Heart left ventricle (tissue), 16 donors: ENCODE measurements at regions of chr7 and their contacts with region 1.

Region 1: GRCh38 chr7:54201501-54201900 is 340.7 kb upstream of the VSTM2A start:
- DNase-seq: no peak
- ATAC-seq: no peak
- H3K4me3 ChIP-seq: no peak overlapping the region
- H3K27ac ChIP-seq: no peak overlapping the region
- H3K4me1 ChIP-seq: no peaks in the 10 kb centered on the region
- H3K27me3 ChIP-seq: no peaks in the 10 kb centered on the region
- CTCF ChIP-seq: no peak
- POLR2A ChIP-seq: no peak

Region 2: GRCh38 chr7:54141576-54141975 is 59.9 kb before region 1 on chr7:
- intact Hi-C with region 1: loop called in 1 of 10 experiments (anchors 10 kb)
- DNase-seq: peak in 1 of 5 donors; percentile 9
- ATAC-seq: peak in 2 of 4 donors; percentile 50 to 57
- H3K4me3 ChIP-seq: no peak overlapping the region
- H3K27ac ChIP-seq: no peak overlapping the region
- H3K4me1 ChIP-seq: no peaks in the 10 kb centered on the region
- H3K27me3 ChIP-seq: no peaks in the 10 kb centered on the region
- CTCF ChIP-seq: no peak
- POLR2A ChIP-seq: no peak

Region 3: GRCh38 chr7:54409917-54410316 is 208.4 kb after region 1 on chr7:
- intact Hi-C with region 1: no loop called
- DNase-seq: no peak
- ATAC-seq: no peak
- H3K4me3 ChIP-seq: no peak overlapping the region
- H3K27ac ChIP-seq: no peak overlapping the region
- H3K4me1 ChIP-seq: no peaks in the 10 kb centered on the region
- H3K27me3 ChIP-seq: no peaks in the 10 kb centered on the region
- CTCF ChIP-seq: no peak
- POLR2A ChIP-seq: no peak

Region 4: DNA sequence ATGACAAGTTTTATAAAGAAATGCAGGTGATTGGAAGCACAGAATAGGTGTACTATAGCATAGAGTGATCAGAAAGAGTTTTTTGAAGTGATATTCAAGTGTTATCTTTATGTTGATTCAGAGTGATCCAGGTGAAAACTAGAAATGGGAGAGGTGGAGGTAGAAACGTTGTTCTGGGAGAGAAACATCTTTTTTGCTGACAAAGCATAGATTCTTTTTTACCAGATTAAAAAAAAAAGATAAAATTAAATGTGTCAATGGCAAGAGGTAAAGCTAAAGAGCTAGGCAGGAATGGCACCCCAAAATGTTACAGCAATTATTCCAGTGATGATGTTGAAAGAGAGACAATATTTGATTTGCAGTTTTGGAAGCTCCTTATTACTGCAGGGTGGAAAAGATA is 328.1 kb after region 1 on chr7:
- intact Hi-C with region 1: no loop called
- DNase-seq: no peak
- ATAC-seq: no peak
- H3K4me3 ChIP-seq: no peak overlapping the region
- H3K27ac ChIP-seq: no peak overlapping the region
- H3K4me1 ChIP-seq: no peaks in the 10 kb centered on the region
- H3K27me3 ChIP-seq: no peaks in the 10 kb centered on the region
- CTCF ChIP-seq: no peak
- POLR2A ChIP-seq: no peak

Region 5: DNA sequence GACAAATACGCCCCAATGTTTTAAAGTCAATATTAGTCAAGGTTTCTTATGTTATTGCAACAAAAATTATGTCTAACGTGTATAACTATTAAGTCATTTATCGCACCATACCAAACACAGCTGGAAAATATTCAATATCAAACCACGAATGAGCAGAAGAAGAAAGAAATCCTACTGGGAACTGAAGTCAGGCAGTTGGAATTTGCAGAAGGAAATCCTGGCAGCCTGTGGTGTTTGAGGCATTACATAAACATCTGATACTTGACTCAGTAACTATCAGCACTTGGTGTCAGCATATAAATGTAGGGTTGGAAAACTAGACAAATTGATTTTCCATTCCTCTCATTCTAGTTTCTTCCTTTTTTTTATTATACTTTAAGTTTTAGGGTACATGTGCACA is 1998.1 kb after region 1 on chr7:
- intact Hi-C with region 1: no loop called
- DNase-seq: no peak
- ATAC-seq: no peak
- H3K4me3 ChIP-seq: no peak overlapping the region
- H3K27ac ChIP-seq: no peak overlapping the region
- H3K4me1 ChIP-seq: no peaks in the 10 kb centered on the region
- H3K27me3 ChIP-seq: no peaks in the 10 kb centered on the region
- CTCF ChIP-seq: no peak
- POLR2A ChIP-seq: no peak